ENCODE measurements at regions of chr14 and their contacts with region 1.

Region 1: DNA sequence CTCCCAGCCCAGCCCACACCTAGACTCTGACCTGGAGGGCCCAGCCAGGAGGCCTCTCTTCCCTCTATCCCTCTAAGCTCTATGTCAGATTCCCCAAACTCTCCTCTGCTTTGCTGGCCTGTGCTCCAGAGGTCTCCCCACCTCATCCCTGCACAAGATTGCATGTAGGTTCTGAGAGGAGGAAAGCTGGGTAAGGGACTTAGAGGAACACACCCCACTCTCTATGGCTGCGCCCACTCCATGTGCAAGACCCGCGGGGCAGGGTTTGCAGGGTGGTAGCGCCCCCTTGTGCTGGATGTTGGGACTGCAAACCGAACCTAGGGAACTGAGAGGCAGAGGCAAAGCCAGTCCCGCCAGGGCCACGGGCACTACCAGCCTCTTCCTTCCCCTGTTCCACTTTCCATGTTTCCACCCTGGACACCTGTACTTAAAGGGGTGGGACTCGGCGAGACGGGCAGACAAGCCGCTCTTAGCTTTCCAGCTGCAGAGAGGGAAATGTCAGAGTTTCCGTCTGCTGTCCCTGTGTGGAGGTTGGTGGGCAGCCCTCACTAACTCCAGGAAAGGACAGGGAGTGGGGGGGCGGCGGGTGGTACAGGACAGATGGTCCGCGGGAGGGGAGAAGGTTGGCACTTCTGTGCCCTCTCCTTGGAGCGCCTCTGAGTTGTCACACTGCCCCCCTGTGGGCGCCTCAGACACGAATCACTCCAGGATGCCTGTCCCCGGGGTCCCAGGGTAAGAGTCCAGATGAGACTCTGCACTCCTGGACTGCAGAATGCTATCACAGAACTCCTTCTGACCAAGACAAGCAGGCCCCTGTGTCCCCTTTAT is 16.8 kb downstream of the MMP14 start:
- DNase-seq: peak; percentile 81 to 96 (median 90)
- ATAC-seq: peak; percentile 91
- H3K4me3 ChIP-seq: peak overlapping the region; percentile 69
- H3K4me3 Mint-ChIP-seq: peak overlapping the region; percentile 83
- H3K27ac ChIP-seq: no peak overlapping the region
- H3K27ac Mint-ChIP-seq: peak overlapping the region; percentile 61
- H3K4me1 ChIP-seq: peaks cover 18% of the 10 kb centered on the region
- H3K4me1 Mint-ChIP-seq: peaks cover 27% of the 10 kb centered on the region
- H3K27me3 ChIP-seq: no peaks in the 10 kb centered on the region
- H3K27me3 Mint-ChIP-seq: peaks cover 5% of the 10 kb centered on the region
- CTCF ChIP-seq: peak; percentile 99

Region 2: DNA sequence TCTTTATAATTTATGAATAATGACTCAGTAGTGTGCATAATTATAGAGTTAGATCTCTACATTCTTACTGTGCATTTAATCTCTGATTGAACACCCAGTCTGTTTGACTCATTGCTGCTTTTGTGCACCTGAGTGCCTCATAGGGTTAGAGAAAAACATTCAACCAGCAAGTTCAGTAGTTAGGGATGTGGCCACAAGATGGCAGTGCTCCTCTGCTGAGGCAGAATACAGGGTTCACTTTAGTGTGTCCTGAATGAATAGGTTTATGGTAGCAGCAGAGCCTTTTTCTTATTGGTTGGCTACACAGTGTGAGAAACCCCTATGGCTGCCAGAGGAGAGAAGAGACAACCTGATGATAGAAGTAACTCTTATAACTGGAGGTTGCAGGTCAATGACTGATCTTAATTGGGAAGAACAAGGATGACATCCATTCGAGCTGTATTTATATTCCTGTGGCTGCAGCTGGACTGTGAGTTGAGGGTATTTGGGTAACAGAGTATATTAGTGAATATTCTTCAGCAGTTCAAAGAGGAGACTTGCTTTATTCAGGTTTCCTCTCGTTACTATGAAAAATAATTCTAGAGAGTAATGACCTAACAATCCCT is 984.6 kb before region 1 on chr14:
- CTCF ChIA-PET with region 1: no interaction called
- POLR2A ChIA-PET with region 1: no interaction called
- intact Hi-C with region 1: loop called in 1 of 2 experiments (anchors 10 kb)
- DNase-seq: peak; percentile 64 to 86 (median 75)
- ATAC-seq: peak; percentile 92
- H3K4me3 ChIP-seq: peak overlapping the region; percentile 23
- H3K4me3 Mint-ChIP-seq: peak overlapping the region; percentile 71
- H3K27ac ChIP-seq: no peak overlapping the region
- H3K27ac Mint-ChIP-seq: peak overlapping the region; percentile 18
- H3K4me1 ChIP-seq: peaks cover 1% of the 10 kb centered on the region
- H3K4me1 Mint-ChIP-seq: peaks cover 36% of the 10 kb centered on the region
- H3K27me3 ChIP-seq: no peaks in the 10 kb centered on the region
- H3K27me3 Mint-ChIP-seq: no peaks in the 10 kb centered on the region
- CTCF ChIP-seq: peak; percentile 78

Region 3: DNA sequence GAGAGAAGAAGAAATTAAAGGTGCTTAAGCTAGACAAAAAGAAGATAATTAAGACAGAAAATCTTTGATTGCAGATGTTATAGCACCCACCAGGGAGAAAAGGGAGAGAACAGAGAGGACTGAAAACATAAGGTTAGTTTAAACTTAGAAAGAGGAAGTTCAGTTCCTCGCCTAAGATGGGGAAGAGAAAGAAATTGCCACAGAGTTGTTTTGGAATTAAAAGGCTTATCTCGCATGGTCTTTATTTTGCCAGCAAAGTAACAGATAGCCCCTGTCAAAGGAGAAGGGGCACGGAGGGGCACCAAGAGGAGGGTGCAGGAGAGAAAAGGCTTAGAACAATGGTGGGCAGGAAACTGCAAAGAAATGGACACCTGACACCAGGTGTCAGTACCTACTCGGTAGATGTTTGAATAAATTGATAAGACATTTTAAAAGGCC is 104.5 kb before region 1 on chr14:
- CTCF ChIA-PET with region 1: interaction called, 4 read pairs
- POLR2A ChIA-PET with region 1: no interaction called
- intact Hi-C with region 1: loop called in 1 of 2 experiments (anchors 1 kb)
- DNase-seq: no peak
- ATAC-seq: no peak
- H3K4me3 ChIP-seq: no peak overlapping the region
- H3K4me3 Mint-ChIP-seq: no peak overlapping the region
- H3K27ac ChIP-seq: no peak overlapping the region
- H3K27ac Mint-ChIP-seq: no peak overlapping the region
- H3K4me1 ChIP-seq: no peaks in the 10 kb centered on the region
- H3K4me1 Mint-ChIP-seq: peaks cover 5% of the 10 kb centered on the region
- H3K27me3 ChIP-seq: peaks cover 0 to 12% of the 10 kb centered on the region in 2 experiments
- H3K27me3 Mint-ChIP-seq: peaks cover 36% of the 10 kb centered on the region
- CTCF ChIP-seq: no peak

Region 4: GRCh38 chr14:22829661-22830442 is 23.3 kb before region 1 on chr14 and contains the start of gene MRPL52:
- CTCF ChIA-PET with region 1: interaction called, 67 read pairs
- POLR2A ChIA-PET with region 1: interaction called, 4 read pairs
- intact Hi-C with region 1: no loop called
- DNase-seq: peak; percentile 84 to 97 (median 89)
- ATAC-seq: peak; percentile 94
- H3K4me3 ChIP-seq: peak within 1 kb of the TSS; percentile 78
- H3K4me3 Mint-ChIP-seq: peak within 1 kb of the TSS; percentile 85
- H3K27ac ChIP-seq: peak within 1 kb of the TSS; percentile 79 to 89
- H3K27ac Mint-ChIP-seq: peak within 1 kb of the TSS; percentile 89
- H3K4me1 ChIP-seq: peaks cover 22% of the 10 kb centered on the region
- H3K4me1 Mint-ChIP-seq: peaks cover 33% of the 10 kb centered on the region
- H3K27me3 ChIP-seq: peaks cover 0 to 3% of the 10 kb centered on the region in 2 experiments
- H3K27me3 Mint-ChIP-seq: peaks cover 5% of the 10 kb centered on the region
- CTCF ChIP-seq: no peak
- total RNA-seq, gene MRPL52: 27.6 to 29.4 TPM

Region 5: DNA sequence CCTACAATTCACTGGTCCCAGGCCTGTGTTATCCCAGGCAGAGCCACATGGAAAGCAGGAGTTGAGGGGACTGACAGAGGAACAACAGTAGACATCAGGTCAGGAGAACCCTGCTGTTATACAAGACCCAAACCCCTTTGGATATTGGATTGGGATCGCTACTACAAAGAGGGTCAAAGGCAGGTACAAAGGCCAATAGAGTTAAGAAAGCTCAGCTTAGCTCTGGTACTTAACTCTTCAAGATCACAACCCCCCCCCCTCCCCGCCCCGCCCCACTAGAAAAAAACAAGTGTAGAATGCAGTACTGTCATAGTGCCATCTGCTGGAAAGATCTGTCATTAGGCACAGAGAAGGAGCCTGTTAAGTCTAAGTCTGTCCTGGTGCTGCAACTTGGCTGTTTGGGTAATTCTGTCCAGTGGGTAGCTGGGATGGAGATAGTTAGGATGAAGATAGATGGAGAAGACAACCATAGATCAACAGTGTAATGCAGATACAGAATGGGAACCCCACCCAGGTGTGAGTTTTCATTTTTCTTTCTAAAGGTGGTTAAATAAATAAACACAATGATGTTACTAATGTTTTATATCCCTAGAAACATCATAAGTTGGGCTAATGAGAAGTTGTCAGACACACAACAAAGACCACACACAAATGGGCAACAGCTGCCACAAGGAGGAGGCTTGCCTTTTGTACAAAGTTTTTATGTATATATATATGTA is 47.1 kb after region 1 on chr14:
- CTCF ChIA-PET with region 1: interaction called, 4 read pairs
- POLR2A ChIA-PET with region 1: no interaction called
- intact Hi-C with region 1: loop called in 1 of 2 experiments (anchors 5 kb)
- DNase-seq: peak in 13 of 14 experiments; percentile 14 to 87 (median 36)
- ATAC-seq: peak; percentile 92
- H3K4me3 ChIP-seq: no peak overlapping the region
- H3K4me3 Mint-ChIP-seq: no peak overlapping the region
- H3K27ac ChIP-seq: no peak overlapping the region
- H3K27ac Mint-ChIP-seq: no peak overlapping the region
- H3K4me1 ChIP-seq: peaks cover 13% of the 10 kb centered on the region
- H3K4me1 Mint-ChIP-seq: peaks cover 15% of the 10 kb centered on the region
- H3K27me3 ChIP-seq: no peaks in the 10 kb centered on the region
- H3K27me3 Mint-ChIP-seq: no peaks in the 10 kb centered on the region
- CTCF ChIP-seq: peak; percentile 68

Region 6: DNA sequence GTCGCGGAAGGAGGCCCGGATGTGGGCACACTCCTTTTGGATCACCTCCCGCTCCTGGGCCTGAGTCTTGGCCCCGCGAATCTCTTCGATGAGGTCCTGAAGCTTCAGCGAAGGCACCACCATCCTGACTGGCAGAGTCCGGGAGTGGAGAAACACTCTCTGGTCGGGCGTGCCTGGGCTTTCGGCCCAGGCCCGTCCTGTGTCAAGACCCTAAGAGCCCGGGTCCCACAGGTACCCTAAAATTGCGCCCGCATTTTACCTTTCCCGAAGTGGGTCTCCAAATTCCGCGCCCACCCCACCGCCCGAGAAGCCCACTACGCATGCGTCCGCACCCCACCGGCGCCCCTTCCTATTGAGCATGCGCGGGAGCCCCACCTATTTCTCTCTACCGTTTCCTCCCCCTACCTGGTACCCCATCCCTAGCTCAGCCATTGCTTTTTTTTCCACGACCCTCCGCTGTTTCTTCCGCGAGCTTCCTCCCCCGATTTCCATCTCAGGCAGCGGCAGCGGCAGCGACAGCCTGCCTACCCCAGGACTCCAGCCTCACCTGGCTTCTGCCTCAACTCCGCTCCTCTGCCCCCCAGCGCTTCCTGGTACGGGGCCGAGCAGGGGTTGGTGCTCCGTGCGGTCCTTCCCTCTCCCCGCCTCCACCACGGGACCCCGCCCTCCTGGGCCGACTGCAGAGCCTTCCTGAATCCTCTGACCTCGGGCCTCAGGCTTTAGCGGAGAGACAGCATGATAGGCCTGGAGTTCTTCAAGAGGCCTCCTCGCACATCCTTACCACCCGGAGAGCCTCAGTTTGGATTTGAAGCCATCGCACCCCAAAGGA is 714.3 kb after region 1 on chr14 and contains the start of gene AP1G2:
- CTCF ChIA-PET with region 1: no interaction called
- POLR2A ChIA-PET with region 1: no interaction called
- intact Hi-C with region 1: no loop called
- DNase-seq: peak; percentile 69 to 94 (median 83)
- ATAC-seq: peak; percentile 91
- H3K4me3 ChIP-seq: peak within 1 kb of the TSS; percentile 75
- H3K4me3 Mint-ChIP-seq: peak within 1 kb of the TSS; percentile 99
- H3K27ac ChIP-seq: peak within 1 kb of the TSS; percentile 75 to 79
- H3K27ac Mint-ChIP-seq: peak within 1 kb of the TSS; percentile 96
- H3K4me1 ChIP-seq: peaks cover 40% of the 10 kb centered on the region
- H3K4me1 Mint-ChIP-seq: peaks cover 52% of the 10 kb centered on the region
- H3K27me3 ChIP-seq: no peaks in the 10 kb centered on the region
- H3K27me3 Mint-ChIP-seq: peaks cover 7% of the 10 kb centered on the region
- CTCF ChIP-seq: no peak
- total RNA-seq, gene AP1G2: 193 to 198 TPM